Lower lobe of right lung (tissue), 2 donors: ENCODE measurements at regions of chr11 and their contacts with region 1.

Region 1: GRCh38 chr11:128290106-128290840 is 297.1 kb downstream of the ETS1 start:
- DNase-seq: peak; percentile 49
- ATAC-seq: peak; percentile 90 to 92
- H3K4me3 ChIP-seq: peak overlapping the region; percentile 23
- H3K27ac ChIP-seq: peak overlapping the region; percentile 69
- H3K4me1 ChIP-seq: peaks cover 41% of the 10 kb centered on the region
- H3K27me3 ChIP-seq: no peaks in the 10 kb centered on the region
- CTCF ChIP-seq: peak; percentile 83

Region 2: GRCh38 chr11:128630367-128631230 is 340.3 kb after region 1 on chr11:
- intact Hi-C with region 1: loop called (anchors 5 kb)
- DNase-seq: peak; percentile 89
- ATAC-seq: peak; percentile 90 to 93
- H3K4me3 ChIP-seq: no peak overlapping the region
- H3K27ac ChIP-seq: peak overlapping the region; percentile 25
- H3K4me1 ChIP-seq: peaks cover 45% of the 10 kb centered on the region
- H3K27me3 ChIP-seq: no peaks in the 10 kb centered on the region
- CTCF ChIP-seq: peak; percentile 89